ENCODE measurements at regions of chr2 and their contacts with region 1.

Region 1: GRCh38 chr2:181715033-181715630 is 34.8 kb upstream of the NEUROD1 start:
- DNase-seq: peak; percentile 62
- ATAC-seq: peak; percentile 55 to 67

Region 2: GRCh38 chr2:180125245-180125962 is 1589.7 kb before region 1 on chr2:
- intact Hi-C with region 1: loop called in 1 of 2 experiments (anchors 2 kb)
- DNase-seq: peak; percentile 60
- ATAC-seq: peak; percentile 89 to 98

Region 3: DNA sequence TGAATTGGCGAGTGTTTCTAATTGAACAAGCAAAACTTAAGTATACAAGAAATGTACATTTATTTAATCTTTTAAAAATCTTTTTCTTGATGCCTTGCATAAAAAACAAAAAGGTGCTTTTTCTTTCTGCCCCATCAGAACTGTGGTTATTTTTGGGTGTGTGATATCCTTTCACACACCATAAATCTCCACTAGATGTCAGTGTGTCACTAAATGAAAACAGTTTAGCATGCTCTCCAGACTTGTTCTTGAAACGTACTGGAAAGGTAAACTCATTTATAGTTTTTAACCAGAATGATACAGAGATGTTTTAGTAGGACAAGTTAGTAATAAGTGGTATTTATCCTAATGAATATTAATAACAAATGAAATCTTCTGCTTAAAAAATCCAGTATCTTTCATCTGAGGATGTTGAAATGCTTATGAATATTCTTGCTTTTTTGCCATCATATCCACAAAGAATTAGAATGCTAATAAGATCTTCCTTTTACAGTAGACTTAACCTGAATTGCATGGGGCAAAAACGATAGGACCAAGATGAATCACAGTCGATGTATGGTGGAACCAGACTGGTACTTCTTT is 637.9 kb before region 1 on chr2:
- intact Hi-C with region 1: loop called in 1 of 2 experiments (anchors 10 kb)
- DNase-seq: no peak
- ATAC-seq: peak; percentile 53 to 78

Region 4: DNA sequence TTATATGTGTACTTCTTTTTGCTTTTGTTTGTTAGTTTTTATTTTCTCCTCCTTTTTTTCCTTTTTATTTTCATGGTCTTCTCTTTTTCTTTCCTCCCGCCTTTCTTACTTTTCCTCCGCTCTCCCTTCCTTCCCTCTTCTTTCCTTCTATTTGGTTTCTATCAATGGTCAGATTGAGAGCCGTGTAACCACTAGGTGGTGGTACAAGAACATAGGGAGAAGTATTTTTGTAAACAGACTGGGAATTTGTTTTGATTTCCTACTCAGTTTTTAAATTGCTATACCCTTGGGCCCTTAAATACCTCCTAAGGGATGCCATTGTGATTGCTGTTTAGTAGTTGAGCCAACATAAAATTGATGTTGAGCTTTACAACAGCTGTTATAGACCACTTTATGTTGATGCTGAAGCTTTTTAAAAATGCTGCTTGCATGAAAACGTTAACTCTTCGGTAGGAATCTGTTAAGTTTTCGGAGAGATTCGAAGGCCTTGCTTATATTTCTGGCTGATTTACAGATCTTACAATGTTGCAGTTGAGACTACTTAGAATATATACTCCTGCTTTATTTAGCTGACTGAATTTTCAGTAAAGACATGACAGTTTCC is 610.5 kb before region 1 on chr2:
- intact Hi-C with region 1: loop called (anchors 2 to 10 kb)
- DNase-seq: no peak
- ATAC-seq: no peak

Region 5: DNA sequence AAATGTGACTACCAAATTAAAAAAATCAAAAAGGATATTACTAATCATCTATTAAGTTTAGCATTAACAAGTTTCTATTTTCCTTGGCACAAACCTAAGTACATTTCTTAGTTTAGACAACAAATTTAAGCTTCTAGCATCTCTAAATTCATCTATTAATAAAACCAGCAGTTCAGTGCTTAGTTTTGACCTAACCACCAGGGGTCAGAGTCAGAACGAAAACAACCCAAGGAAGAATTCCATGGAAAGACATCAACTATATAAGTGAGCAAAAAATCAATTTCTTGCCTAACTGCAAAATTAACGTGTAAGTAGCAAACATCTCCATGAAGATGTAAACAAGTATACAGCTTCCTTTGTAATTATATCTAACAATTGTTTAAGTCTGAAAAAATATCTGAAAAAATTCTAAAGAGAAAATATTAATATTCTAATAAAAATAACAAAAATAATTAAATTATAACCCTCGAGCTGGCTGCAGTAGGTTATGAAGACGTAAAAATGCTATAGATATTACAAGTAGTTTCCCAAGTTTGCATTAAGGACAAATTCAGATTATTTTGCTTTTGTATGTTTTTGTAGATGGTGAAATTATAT is 141.9 kb before region 1 on chr2:
- intact Hi-C with region 1: loop called (anchors 5 kb)
- DNase-seq: no peak
- ATAC-seq: no peak

Region 6: DNA sequence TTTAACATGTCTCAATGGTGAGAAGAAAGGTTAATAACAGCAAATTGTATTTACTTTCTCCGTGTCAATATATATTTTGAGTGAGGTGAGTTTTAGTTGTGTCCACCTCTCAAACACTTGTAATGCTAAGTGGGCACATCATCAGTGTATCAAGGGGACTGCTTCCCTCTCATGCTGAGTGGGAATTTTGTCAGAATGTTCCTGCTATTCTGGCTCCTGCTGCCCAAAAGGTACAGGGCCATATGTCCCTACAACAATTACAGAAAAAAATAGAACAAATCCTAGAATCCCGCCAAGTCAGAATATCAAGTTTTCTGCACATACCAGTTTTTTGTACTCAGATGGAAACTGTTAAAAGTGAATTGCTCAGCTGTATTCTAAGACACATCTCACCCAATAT is 52.8 kb before region 1 on chr2:
- intact Hi-C with region 1: no loop called
- DNase-seq: no peak
- ATAC-seq: no peak